ENCODE measurements at regions of chr4 and their contacts with region 1.

Region 1: DNA sequence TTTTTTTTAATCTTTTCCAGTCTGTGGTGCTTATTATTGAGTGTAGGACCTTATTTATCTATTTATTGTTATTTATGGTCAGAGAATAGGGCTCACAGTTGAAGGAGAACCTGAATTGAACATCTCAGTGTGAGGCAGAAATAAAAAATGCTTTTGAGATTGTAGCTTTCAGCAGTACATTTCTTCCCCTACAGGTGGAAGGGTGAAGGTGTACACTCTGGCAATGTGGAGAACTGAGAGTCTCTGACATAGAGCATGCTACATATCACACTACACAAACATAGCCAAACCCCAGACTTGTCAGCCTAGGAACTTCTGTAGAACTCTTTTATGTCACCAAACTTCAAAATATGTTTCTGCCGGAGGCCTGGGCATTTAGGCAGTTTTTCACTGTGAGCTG is 140.2 kb downstream of the STIM2 start:
- DNase-seq: no peak
- H3K4me3 Mint-ChIP-seq: no peak overlapping the region
- H3K27ac Mint-ChIP-seq: peak overlapping the region; percentile 51
- H3K4me1 Mint-ChIP-seq: peaks cover 52% of the 10 kb centered on the region
- H3K27me3 Mint-ChIP-seq: no peaks in the 10 kb centered on the region

Region 2: DNA sequence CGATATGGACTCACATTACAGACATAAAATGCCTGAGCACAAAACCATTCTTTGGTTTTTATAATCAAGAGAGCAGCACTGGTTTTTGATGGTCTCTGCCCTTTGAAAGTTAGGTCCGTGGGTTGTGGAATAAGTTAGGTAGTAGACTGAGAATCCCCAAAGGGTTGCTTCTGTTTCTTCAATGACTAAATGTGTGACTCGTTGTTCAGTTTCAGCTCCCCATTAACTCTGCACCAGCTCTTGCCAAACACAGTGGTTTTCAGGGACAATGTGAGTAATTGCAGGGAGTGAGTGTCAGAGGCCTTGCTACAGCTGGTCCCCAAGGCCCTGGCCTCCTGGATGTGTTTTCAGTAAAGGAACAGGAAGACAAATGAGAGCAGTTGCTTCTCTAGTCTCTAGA is 1062.0 kb before region 1 on chr4:
- CTCF ChIA-PET with region 1: no interaction called
- POLR2A ChIA-PET with region 1: no interaction called
- intact Hi-C with region 1: loop called (anchors 5 kb)
- DNase-seq: peak; percentile 77
- H3K4me3 Mint-ChIP-seq: no peak overlapping the region
- H3K27ac Mint-ChIP-seq: peak overlapping the region; percentile 82
- H3K4me1 Mint-ChIP-seq: peaks cover 24% of the 10 kb centered on the region
- H3K27me3 Mint-ChIP-seq: peaks cover 20% of the 10 kb centered on the region

Region 3: DNA sequence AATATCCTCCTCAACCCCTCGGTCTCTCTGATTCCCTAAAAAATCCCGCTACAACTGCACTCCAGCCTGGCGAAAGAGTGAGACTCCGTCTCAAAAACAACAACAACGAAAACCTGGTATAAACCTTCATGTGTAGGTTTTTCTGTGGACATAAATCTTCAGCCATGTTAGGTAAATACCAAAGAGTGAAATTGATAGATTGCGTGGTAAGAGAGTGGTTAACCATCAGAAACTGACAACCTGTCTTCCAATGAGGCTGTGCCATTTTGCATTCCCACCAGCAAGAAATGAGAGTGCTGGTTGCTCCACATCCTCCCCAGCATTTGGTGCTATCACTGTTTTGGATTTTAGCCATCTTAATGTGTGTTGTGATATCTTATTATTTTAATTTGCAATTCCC is 406.0 kb before region 1 on chr4:
- CTCF ChIA-PET with region 1: no interaction called
- POLR2A ChIA-PET with region 1: no interaction called
- intact Hi-C with region 1: no loop called
- DNase-seq: no peak
- H3K4me3 Mint-ChIP-seq: no peak overlapping the region
- H3K27ac Mint-ChIP-seq: no peak overlapping the region
- H3K4me1 Mint-ChIP-seq: peaks cover 4% of the 10 kb centered on the region
- H3K27me3 Mint-ChIP-seq: no peaks in the 10 kb centered on the region

Region 4: DNA sequence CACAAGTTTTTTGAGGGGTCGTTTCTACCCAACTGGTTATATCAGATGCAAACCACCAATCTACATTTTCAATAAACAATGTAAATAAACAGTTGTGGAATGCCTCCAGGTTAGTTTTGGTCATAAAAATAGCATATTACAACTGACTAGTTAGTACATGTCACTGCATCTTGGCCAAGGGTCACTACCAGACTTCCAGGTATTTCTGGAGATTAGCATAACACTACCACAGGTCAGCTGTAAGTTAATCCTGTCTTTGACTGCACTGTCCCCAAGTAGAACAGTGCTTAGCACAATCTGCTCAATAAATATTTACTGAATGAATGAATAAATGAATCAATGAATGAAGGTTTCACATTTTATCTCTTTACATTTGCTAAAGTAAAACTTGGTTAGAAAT is 352.6 kb before region 1 on chr4:
- CTCF ChIA-PET with region 1: no interaction called
- POLR2A ChIA-PET with region 1: no interaction called
- intact Hi-C with region 1: no loop called
- DNase-seq: no peak
- H3K4me3 Mint-ChIP-seq: no peak overlapping the region
- H3K27ac Mint-ChIP-seq: no peak overlapping the region
- H3K4me1 Mint-ChIP-seq: no peaks in the 10 kb centered on the region
- H3K27me3 Mint-ChIP-seq: no peaks in the 10 kb centered on the region

Region 5: DNA sequence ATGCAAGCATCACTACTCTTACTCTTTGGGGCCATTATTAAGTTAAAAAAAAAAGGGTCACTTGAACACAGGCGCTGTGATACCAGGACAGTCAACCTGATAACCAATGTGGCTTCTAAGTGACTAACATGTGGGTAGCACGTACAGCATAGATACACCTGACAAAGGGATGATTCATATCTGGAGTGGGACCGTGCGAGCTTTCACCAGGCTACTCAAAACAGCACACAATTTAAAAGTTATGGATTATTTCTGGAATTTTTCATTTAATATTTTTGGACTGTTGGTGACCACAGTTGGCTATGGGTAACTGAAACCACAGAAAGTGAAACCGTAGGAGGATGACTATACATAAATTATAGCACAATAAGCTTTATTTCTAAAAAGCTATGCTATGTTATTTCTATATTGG is 254.0 kb before region 1 on chr4:
- CTCF ChIA-PET with region 1: interaction called, 4 read pairs
- POLR2A ChIA-PET with region 1: no interaction called
- intact Hi-C with region 1: loop called (anchors 5 kb)
- DNase-seq: peak; percentile 72
- H3K4me3 Mint-ChIP-seq: no peak overlapping the region
- H3K27ac Mint-ChIP-seq: no peak overlapping the region
- H3K4me1 Mint-ChIP-seq: peaks cover 13% of the 10 kb centered on the region
- H3K27me3 Mint-ChIP-seq: no peaks in the 10 kb centered on the region

Region 6: GRCh38 chr4:26878794-26879391 is 121.9 kb before region 1 on chr4:
- CTCF ChIA-PET with region 1: no interaction called
- POLR2A ChIA-PET with region 1: interaction called, 6 read pairs
- intact Hi-C with region 1: loop called (anchors 1 kb)
- DNase-seq: peak; percentile 47
- H3K4me3 Mint-ChIP-seq: peak overlapping the region; percentile 60
- H3K27ac Mint-ChIP-seq: peak overlapping the region; percentile 99
- H3K4me1 Mint-ChIP-seq: peaks cover 73% of the 10 kb centered on the region
- H3K27me3 Mint-ChIP-seq: no peaks in the 10 kb centered on the region

Region 7: DNA sequence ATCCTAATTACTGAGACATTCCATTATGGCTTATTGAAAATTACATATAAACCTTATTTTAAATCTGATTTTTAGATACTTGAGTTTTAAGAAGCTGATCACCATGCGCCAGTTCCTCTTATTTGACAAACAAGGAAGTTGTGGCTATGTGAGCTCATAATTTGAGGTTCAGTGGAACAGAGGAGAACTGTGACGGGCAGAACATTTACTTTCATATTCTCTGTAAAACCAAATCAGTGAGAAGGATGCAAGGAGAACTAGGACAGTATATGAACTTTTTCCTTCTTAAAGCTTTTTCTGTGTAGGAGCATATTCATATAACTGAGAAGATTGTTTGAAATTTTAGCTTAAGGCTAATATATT is 114.9 kb before region 1 on chr4:
- CTCF ChIA-PET with region 1: interaction called, 5 read pairs
- POLR2A ChIA-PET with region 1: interaction called, 5 read pairs
- intact Hi-C with region 1: loop called (anchors 1 kb)
- DNase-seq: no peak
- H3K4me3 Mint-ChIP-seq: peak overlapping the region; percentile 63
- H3K27ac Mint-ChIP-seq: peak overlapping the region; percentile 83
- H3K4me1 Mint-ChIP-seq: peaks cover 67% of the 10 kb centered on the region
- H3K27me3 Mint-ChIP-seq: no peaks in the 10 kb centered on the region

Region 8: GRCh38 chr4:27327421-27328181 is 326.8 kb after region 1 on chr4:
- CTCF ChIA-PET with region 1: no interaction called
- POLR2A ChIA-PET with region 1: no interaction called
- intact Hi-C with region 1: no loop called
- DNase-seq: no peak
- H3K4me3 Mint-ChIP-seq: no peak overlapping the region
- H3K27ac Mint-ChIP-seq: no peak overlapping the region
- H3K4me1 Mint-ChIP-seq: no peaks in the 10 kb centered on the region
- H3K27me3 Mint-ChIP-seq: no peaks in the 10 kb centered on the region